ENCODE measurements at regions of chr10 and their contacts with region 1.

Region 1: DNA sequence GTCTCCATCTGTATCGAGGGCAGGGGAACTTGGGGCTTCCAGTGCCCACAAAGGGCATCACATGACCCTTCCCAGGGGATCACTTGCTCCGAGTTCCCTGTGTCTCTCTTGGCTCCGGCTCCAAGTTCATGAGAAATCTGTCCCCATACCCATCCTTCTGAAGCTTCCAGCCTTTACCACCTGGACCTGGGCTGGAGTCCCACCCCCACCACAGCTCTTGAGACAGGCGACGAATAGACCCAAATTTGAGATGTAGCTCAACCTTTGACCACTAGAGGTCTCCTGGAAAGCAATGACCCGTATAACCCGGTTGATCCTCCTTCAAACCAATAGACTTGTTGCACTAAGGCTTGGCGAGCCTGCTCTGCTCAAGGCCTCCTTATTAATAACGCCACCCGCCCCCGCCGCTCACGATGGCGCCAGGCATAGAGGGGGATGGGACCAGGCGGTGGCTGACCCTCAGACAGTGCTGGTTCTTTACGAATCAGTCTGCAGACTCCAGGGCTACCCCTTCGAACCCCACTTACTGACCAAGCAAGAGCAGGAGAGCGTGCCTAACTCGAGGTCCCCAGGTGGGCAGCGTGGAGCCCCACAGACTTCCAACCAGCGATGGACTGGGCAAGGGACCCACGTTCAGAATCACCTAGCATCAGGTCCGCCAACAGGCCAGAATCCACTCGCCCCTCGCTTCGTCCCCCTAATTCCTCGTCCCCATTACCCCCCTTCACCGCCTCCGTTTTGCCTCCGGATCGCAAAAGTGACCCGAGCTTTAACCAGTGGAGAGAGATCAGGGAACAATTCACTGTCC is 4.4 kb upstream of the ARID5B start:
- DNase-seq: peak; percentile 86
- CTCF ChIP-seq: peak; percentile 65

Region 2: GRCh38 chr10:61376862-61377368 is 520.1 kb before region 1 on chr10:
- CTCF ChIA-PET with region 1: no interaction called
- POLR2A ChIA-PET with region 1: no interaction called
- DNase-seq: no peak
- CTCF ChIP-seq: no peak

Region 3: DNA sequence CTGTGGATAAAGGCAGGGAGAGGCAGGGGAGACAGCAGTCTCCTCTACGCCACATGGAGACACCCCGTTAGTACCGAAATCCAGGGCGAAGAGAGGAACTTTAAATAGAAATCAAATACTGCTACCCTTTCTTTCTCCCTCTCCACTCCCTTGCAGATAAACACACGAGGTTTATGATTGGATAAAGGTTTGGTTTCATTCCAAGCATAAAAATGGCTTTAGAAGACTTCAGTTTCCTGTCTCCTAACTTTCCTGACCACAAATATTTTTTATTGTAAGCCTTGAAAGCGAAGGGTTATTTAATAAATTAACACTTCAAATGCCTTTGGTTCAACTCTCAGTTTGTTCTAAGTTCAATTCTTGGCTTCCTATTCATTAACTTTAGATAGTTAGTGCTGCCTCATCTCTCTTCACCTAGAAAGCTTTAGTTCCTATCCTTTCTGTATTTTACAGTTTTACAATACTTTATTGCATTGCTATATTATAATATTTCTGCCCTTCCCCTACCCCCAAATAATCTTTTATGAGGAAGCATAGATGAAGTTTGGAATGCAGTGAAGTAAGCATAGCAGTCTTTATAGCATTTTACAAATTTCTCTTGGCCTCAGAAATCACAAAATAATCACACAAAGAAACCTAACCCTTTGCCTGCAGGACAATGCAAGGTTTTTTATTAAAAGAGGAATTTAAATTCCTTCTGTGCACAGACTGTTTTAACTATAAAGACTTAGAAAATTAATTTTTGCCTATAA is 27.1 kb before region 1 on chr10:
- CTCF ChIA-PET with region 1: interaction called, 20 read pairs
- POLR2A ChIA-PET with region 1: no interaction called
- DNase-seq: no peak
- CTCF ChIP-seq: no peak

Region 4: DNA sequence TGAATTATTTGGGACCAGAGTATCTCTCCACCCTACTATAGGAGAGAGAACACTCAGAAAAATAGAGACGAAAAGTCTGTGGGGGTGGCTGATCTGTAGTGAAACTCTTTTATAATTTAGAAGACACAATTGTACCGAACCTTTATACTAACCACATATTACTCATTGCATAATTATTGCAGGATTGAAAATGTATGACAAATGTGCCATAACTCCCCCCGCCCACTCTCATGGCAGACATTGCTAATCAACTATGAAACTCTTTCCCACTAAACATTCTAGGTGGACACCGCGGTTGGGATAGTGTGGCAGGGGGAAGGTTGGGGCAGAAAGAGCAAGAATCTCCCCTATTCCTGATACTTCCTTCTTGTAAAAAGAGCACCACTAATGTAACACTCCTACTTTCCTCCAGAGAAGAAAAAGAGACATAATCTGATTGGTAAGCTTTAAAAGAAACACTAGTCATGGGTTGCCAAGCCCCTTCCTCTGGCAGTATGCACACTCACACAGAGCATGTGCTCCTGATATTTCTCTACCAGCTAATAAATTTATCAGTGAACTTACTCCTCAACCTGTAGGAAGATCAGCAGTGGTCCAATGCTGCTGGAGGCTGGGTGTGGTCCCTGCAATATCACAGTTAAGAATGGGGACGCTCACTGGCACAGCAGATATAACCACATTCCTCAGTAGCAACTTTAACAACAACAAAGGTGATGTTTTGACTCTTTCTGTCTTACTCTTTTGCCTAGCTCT is 14.3 kb before region 1 on chr10:
- CTCF ChIA-PET with region 1: interaction called, 45 read pairs
- POLR2A ChIA-PET with region 1: no interaction called
- DNase-seq: no peak
- CTCF ChIP-seq: no peak

Region 5: GRCh38 chr10:61987951-61988379 is 90.9 kb after region 1 on chr10:
- CTCF ChIA-PET with region 1: interaction called, 12 read pairs
- POLR2A ChIA-PET with region 1: no interaction called
- DNase-seq: peak; percentile 75
- CTCF ChIP-seq: no peak

Region 6: GRCh38 chr10:62050893-62051433 is 153.9 kb after region 1 on chr10:
- CTCF ChIA-PET with region 1: interaction called, 11 read pairs
- POLR2A ChIA-PET with region 1: no interaction called
- DNase-seq: peak; percentile 47
- CTCF ChIP-seq: no peak

Measured in GM10248 (cell line).